ENCODE measurements at regions of chr17 and their contacts with region 1.

Region 1: GRCh38 chr17:409848-410545 is 57.4 kb upstream of the RPH3AL start:
- DNase-seq: peak; percentile 97 to 99 (median 99)
- H3K4me3 ChIP-seq: peak overlapping the region; percentile 68 to 70
- H3K4me3 Mint-ChIP-seq: peak overlapping the region; percentile 88 to 97 (median 93)
- H3K27ac ChIP-seq: peak overlapping the region; percentile 85
- H3K27ac Mint-ChIP-seq: peak overlapping the region; percentile 93 to 99 (median 96)
- H3K4me1 ChIP-seq: peaks cover 55% of the 10 kb centered on the region
- H3K4me1 Mint-ChIP-seq: peaks cover 53 to 79% (median 66%) of the 10 kb centered on the region in 4 donors
- H3K27me3 ChIP-seq: no peaks in the 10 kb centered on the region
- H3K27me3 Mint-ChIP-seq: peaks cover 2% of the 10 kb centered on the region in 2 donors

Region 2: DNA sequence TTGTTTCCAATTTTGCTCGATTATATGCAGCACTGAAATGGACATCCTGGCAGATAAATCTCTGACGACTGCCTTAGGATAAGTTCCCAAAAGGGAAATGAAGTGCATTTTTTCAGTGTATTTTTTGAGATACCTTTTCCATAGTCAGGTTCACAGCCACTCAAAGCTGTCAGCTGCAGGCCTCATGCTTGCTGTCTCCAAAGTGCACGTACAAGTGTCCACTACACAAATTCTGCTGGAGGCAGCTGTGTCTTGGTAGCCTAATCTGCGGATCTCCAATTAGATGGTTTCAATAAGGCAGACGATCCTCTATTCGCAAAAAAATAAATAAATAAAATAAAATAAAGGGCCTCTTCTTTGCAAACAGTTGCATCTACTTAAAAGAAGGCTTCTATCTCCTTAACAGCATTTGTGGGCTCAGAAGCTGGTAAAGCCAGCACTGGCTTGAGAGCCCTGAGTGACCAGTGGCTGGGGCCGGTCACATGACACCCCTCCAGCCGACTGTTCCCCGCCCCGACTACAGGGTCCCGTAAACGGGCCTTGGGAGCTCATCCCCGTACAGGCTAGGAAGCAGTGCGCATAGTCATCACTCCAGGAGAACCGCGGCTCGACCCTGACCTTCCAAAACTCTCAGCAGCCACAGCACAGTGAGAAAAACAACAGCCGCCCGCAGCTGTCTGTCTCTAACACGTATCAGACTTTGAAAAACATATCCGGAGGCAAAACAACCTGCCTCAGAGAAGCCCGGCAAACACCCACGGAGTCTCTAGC is 76.2 kb before region 1 on chr17:
- CTCF ChIA-PET with region 1: no interaction called
- POLR2A ChIA-PET with region 1: no interaction called
- intact Hi-C with region 1: no loop called
- DNase-seq: no peak
- H3K4me3 ChIP-seq: no peak overlapping the region
- H3K4me3 Mint-ChIP-seq: peak overlapping the region in 4 of 8 donors; percentile 25 to 65 (median 54)
- H3K27ac ChIP-seq: no peak overlapping the region
- H3K27ac Mint-ChIP-seq: peak overlapping the region in 6 of 7 donors; percentile 13 to 74 (median 34)
- H3K4me1 ChIP-seq: peaks cover 49% of the 10 kb centered on the region
- H3K4me1 Mint-ChIP-seq: peaks cover 4 to 55% (median 35%) of the 10 kb centered on the region in 4 donors
- H3K27me3 ChIP-seq: no peaks in the 10 kb centered on the region
- H3K27me3 Mint-ChIP-seq: peaks cover 3 to 5% of the 10 kb centered on the region in 2 donors

Region 3: GRCh38 chr17:422196-422930 is 12.4 kb after region 1 on chr17:
- CTCF ChIA-PET with region 1: interaction called, 25 read pairs
- POLR2A ChIA-PET with region 1: no interaction called
- intact Hi-C with region 1: no loop called
- DNase-seq: no peak
- H3K4me3 ChIP-seq: no peak overlapping the region
- H3K4me3 Mint-ChIP-seq: no peak overlapping the region
- H3K27ac ChIP-seq: no peak overlapping the region
- H3K27ac Mint-ChIP-seq: peak overlapping the region in 1 of 7 donors; percentile 77
- H3K4me1 ChIP-seq: peaks cover 36% of the 10 kb centered on the region
- H3K4me1 Mint-ChIP-seq: peaks cover 27 to 42% (median 35%) of the 10 kb centered on the region in 4 donors
- H3K27me3 ChIP-seq: no peaks in the 10 kb centered on the region
- H3K27me3 Mint-ChIP-seq: no peaks in the 10 kb centered on the region

Region 4: GRCh38 chr17:491086-492021 is 81.4 kb after region 1 on chr17:
- CTCF ChIA-PET with region 1: interaction called, 15 read pairs
- POLR2A ChIA-PET with region 1: interaction called, 31 read pairs
- intact Hi-C with region 1: no loop called
- DNase-seq: peak; percentile 36 to 59 (median 50)
- H3K4me3 ChIP-seq: peak overlapping the region in 1 of 2 donors; percentile 32
- H3K4me3 Mint-ChIP-seq: peak overlapping the region; percentile 51 to 83 (median 71)
- H3K27ac ChIP-seq: no peak overlapping the region
- H3K27ac Mint-ChIP-seq: peak overlapping the region in 3 of 7 donors; percentile 82 to 97 (median 88)
- H3K4me1 ChIP-seq: peaks cover 10% of the 10 kb centered on the region
- H3K4me1 Mint-ChIP-seq: peaks cover 5 to 29% (median 7%) of the 10 kb centered on the region in 4 donors
- H3K27me3 ChIP-seq: no peaks in the 10 kb centered on the region
- H3K27me3 Mint-ChIP-seq: peaks cover 0 to 2% of the 10 kb centered on the region in 2 donors

Region 5: GRCh38 chr17:700504-701094 is 290.6 kb after region 1 on chr17:
- CTCF ChIA-PET with region 1: interaction called, 182 read pairs
- POLR2A ChIA-PET with region 1: interaction called, 22 read pairs
- intact Hi-C with region 1: loop called (anchors 1 kb)
- DNase-seq: peak in 4 of 5 donors; percentile 53 to 60 (median 58)
- H3K4me3 ChIP-seq: no peak overlapping the region
- H3K4me3 Mint-ChIP-seq: no peak overlapping the region
- H3K27ac ChIP-seq: no peak overlapping the region
- H3K27ac Mint-ChIP-seq: peak overlapping the region in 2 of 7 donors; percentile 44 to 75
- H3K4me1 ChIP-seq: no peaks in the 10 kb centered on the region
- H3K4me1 Mint-ChIP-seq: peaks cover 0 to 4% (median 3%) of the 10 kb centered on the region in 4 donors
- H3K27me3 ChIP-seq: no peaks in the 10 kb centered on the region
- H3K27me3 Mint-ChIP-seq: no peaks in the 10 kb centered on the region

Region 6: DNA sequence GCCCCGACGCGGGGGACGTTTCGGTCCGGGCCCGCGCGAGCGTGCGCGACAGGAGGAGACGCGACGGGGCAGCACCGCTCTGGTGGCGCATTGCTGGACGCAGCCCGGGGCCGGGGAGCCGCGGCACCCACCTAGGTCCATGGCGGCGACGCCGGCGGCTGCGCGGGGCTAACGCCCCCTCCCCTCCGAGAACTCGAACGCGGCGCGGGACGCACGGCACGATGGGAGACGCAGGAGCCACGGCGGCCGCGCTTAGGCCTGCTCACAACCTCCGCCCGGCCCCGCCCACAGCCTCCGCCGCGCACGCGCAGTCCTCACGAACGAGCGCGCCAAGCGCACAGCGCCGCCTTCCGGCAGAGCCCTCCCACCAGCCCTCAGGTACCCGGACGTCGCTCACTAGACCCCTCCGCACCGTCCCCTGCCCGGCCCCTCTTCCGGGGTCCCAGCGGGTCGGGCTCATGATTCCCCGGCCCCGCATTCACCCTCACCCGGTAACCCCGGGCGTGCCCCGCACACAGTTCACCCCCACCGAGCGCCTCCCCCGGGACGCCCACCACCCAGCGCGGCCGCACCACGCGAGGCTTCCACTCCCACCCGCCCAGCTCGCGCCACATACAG is 342.1 kb after region 1 on chr17 and contains the start of gene GEMIN4:
- CTCF ChIA-PET with region 1: interaction called, 8 read pairs
- POLR2A ChIA-PET with region 1: no interaction called
- intact Hi-C with region 1: loop called (anchors 1 kb)
- DNase-seq: peak; percentile 93 to 99 (median 96)
- H3K4me3 ChIP-seq: peak within 1 kb of the TSS; percentile 73 to 81
- H3K4me3 Mint-ChIP-seq: peak within 1 kb of the TSS; percentile 92 to 97 (median 94)
- H3K27ac ChIP-seq: peak within 1 kb of the TSS; percentile 69
- H3K27ac Mint-ChIP-seq: peak within 1 kb of the TSS; percentile 86 to 97 (median 95)
- H3K4me1 ChIP-seq: peaks cover 27% of the 10 kb centered on the region
- H3K4me1 Mint-ChIP-seq: peaks cover 24 to 46% (median 33%) of the 10 kb centered on the region in 4 donors
- H3K27me3 ChIP-seq: no peaks in the 10 kb centered on the region
- H3K27me3 Mint-ChIP-seq: no peaks in the 10 kb centered on the region
- total RNA-seq, gene GEMIN4: 24.4 to 24.7 TPM

Region 7: GRCh38 chr17:979538-980405 is 569.8 kb after region 1 on chr17 and contains the start of gene NXN:
- CTCF ChIA-PET with region 1: interaction called, 8 read pairs
- POLR2A ChIA-PET with region 1: interaction called, 3 read pairs
- intact Hi-C with region 1: loop called (anchors 2 kb)
- DNase-seq: peak; percentile 79 to 88 (median 83)
- H3K4me3 ChIP-seq: peak within 1 kb of the TSS in 1 of 2 donors; percentile 45
- H3K4me3 Mint-ChIP-seq: peak within 1 kb of the TSS; percentile 73 to 89 (median 85)
- H3K27ac ChIP-seq: peak within 1 kb of the TSS; percentile 37
- H3K27ac Mint-ChIP-seq: peak within 1 kb of the TSS in 4 of 7 donors; percentile 30 to 93 (median 65)
- H3K4me1 ChIP-seq: peaks cover 20% of the 10 kb centered on the region
- H3K4me1 Mint-ChIP-seq: peaks cover 7 to 21% (median 15%) of the 10 kb centered on the region in 4 donors
- H3K27me3 ChIP-seq: peaks cover 14% of the 10 kb centered on the region
- H3K27me3 Mint-ChIP-seq: peaks cover 19 to 25% of the 10 kb centered on the region in 2 donors
- total RNA-seq, gene NXN: 0.55 to 1.5 TPM